ENCODE measurements at regions of chr16 and their contacts with region 1.

Region 1: GRCh38 chr16:4307215-4308037 is 8.4 kb upstream of the GLIS2 start:
- DNase-seq: peak; percentile 99
- CTCF ChIP-seq: peak; percentile 1

Region 2: DNA sequence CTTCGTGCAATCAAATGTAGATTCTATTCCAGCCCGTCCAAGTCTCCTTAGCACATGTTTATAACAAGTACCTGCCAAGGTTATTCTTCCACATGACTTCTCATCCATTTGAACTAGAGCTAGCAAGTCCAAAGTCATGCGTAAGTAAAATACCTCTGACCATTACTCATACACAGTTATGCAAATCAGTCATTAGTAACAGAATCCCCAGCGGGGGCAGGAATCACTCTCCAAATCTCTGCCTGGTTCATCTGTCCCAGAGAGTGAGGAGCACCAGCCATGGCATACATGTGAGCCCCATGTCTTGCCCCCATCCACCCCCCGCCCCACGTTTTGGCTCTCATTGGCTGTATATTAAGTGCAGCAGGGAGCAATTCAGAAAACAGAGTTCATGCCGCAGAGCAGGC is 93.2 kb before region 1 on chr16:
- CTCF ChIA-PET with region 1: no interaction called
- POLR2A ChIA-PET with region 1: no interaction called
- DNase-seq: no peak
- CTCF ChIP-seq: no peak

Region 3: DNA sequence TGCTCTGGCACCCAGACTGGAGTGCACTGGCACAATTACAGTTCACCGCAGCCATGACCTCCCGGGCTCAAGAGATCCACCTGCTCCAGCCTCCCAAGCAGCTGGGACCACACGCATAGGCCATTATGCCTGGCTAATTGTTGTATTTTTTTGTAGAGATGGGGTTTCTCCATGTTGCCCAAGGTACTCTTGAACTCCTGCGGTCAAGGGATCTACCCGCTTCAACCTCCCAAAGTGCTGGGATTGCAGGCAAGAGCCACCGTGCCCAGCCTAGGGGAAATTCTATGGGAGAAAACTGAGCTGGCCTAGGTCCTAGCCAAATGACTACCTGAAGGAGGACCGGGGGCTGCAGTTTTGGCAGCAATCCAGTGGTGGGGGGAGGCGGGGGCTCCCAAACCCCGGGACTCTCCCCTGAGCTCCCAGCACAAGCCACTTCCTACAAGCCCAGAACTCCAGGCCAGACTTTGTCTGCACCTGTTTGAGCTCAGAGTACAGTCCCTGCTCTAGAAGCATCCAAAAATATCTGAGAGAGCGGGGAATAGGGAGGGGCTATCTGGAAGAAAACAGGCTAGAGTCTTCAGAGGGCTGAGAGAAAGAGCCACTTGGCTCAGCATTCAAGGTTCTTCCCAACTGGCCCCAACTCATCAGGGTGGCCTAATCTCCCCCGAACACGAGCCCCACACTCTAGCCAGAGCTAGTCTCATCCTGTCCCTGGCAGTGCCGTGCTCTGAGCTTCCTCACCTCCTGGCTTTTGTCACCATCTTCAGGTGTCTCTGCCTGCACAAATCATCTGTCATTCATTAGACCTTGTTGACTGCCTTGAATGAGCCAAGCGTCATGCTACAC is 74.7 kb before region 1 on chr16:
- CTCF ChIA-PET with region 1: no interaction called
- POLR2A ChIA-PET with region 1: no interaction called
- DNase-seq: no peak
- CTCF ChIP-seq: no peak

Region 4: DNA sequence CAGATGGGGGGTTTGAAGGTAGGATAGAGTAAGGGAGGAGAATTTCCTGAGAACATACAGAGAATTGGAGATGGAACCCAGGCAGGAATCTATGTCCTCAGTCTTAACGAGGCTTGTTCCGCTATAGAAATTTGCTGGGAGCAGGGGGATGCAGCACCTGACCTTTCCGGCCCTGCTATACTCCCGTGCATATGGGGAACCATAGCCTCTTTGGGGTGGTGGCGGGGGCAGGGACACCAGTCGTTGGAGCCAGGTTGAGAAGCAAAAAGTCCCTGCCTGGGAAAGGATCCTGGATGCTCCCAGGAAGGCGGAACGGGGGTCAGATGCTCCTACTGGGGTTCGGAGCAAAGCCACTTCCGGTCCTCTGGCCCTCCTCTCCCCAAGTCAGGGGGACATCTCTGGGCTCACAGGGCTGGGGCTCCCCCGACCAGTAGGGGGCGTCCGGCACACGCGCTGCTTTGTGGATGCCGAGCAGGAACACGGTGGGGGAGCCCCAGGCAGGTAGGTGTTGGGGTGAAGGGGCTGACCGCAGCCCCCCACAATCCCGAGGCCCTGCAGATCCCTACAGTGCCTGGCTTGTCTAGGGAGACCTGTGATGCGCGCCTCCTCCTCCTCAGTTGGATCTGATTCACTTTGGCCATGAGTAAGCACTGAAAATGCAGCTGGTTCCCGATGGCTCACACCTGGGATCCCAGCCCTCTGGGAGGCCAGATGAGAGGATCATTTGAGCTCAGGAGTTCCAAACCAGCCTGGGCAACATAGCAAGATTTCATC is 19.1 kb before region 1 on chr16:
- CTCF ChIA-PET with region 1: interaction called, 23 read pairs
- POLR2A ChIA-PET with region 1: no interaction called
- DNase-seq: peak; percentile 94
- CTCF ChIP-seq: peak; percentile 99

Region 5: GRCh38 chr16:4350787-4351659 is 43.6 kb after region 1 on chr16 and contains the start of gene PAM16:
- CTCF ChIA-PET with region 1: interaction called, 14 read pairs
- POLR2A ChIA-PET with region 1: no interaction called
- DNase-seq: peak; percentile 98
- CTCF ChIP-seq: no peak

Measured in GM10248 (cell line).